Right ventricle myocardium superior (tissue), 1 donor: ENCODE measurements at regions of chr17 and their contacts with region 1.

Region 1: GRCh38 chr17:82687375-82687861 is 11.1 kb downstream of the RAB40B start:
- DNase-seq: no peak
- ATAC-seq: peak; percentile 25

Region 2: DNA sequence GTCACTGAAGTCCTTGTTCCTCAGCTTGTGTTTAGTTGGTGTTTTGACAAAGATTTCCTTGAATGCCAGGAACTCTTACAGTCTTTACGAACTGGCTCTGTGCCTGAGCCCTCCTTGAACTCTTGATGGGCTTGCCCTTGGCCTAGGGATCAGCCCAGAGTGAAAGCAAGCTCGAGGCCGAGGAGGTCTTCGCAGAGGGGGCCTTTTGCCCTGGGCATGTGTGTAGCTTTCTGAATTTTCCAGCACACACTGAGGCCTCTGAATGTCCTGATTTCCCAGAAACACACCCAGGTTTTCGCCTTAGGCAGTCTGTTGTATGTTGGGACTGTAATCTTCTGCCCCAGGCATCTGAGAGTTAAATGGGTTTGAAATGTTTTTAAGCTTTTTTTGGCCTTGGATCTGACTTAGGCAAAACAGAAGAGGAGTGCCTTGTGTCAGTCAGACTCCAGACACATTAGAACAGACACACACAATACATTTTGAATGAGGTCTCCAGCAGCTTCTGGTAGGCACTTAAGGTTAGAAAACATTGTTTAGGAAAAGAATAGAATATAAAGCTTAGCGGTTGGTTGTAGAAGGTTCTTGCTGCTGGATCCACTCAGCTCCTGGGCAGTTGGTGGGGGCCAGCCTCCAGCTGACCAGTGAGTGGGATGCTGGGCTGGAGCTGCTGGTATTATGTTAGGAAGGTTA is 150.8 kb before region 1 on chr17:
- intact Hi-C with region 1: no loop called
- DNase-seq: peak; percentile 56
- ATAC-seq: peak; percentile 56

Region 3: DNA sequence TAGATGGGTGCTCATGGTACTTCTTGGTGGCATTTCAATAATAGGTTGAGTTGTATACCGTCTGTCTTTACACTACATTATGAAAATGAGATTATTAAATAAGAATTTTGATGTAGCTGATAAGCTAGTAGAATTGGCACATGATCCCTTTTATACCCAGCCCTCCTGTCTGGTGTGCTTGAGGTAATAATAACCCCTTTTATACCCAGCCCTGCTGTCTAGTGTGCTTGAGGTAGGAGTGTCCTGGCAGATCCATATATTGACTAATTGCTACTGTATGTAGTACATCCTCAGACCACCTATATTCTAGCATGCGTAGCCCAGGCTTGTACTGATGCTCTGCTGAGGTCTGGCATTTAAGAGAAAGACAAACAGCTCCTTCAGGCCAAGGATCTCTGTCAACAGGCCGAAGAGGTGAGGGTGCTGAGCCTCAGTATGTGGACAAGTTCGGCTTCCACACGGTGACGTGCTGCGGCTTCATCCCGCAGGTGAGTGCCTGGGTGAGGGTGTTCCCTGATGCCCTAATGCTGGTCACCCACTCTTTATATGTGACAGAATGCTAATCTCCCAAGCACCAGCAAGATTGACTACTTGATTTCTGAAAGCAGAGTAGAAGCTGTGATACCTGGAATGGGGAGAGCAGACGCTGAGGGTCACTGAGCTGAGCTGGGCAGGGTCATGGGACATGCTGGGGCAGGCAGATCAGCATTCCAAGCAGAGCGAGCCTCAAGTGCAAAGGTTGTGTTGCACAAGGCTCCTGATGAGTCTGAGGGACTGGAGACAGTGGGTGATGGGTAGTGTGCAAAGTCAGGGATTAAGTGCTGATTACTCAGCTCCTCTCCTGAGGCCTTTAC is 53.7 kb after region 1 on chr17:
- intact Hi-C with region 1: loop called (anchors 2 kb)
- DNase-seq: no peak
- ATAC-seq: no peak